ENCODE measurements at regions of chr12 and their contacts with region 1.

Region 1: DNA sequence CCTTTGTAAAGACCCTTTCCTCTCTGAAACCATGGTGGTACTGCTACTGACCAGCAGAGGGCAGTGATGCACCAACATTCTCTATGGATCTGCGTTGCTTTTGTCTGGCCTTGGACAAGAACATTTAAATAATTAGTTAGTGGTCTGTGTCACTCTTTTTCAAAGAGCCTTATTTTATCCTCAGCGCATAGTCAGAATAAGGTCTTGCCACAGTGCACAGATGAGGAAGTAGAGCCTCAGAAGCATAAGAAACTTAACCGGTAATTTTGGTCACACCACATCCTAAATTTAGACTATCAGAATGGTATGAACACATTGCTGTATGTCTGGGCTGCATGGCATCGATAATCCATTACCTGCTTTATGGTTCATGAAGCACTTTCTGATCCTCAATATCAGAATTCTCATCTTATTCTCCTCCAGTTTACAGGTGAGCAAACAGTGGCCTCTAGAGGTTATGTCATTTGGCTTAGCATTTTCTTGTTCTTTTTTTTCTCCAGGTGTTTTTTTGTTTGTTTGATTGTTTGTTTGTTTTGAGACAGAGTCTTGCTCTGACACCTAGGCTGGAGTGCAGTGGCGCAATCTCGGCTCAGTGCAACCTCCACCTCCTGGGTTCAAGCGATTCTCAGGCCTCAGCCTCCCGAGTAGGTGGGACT is 23.7 kb upstream of the IFT81 start:
- DNase-seq: peak; percentile 41
- ATAC-seq: peak; percentile 96
- H3K4me3 Mint-ChIP-seq: peak overlapping the region; percentile 50
- H3K27ac Mint-ChIP-seq: peak overlapping the region; percentile 80
- H3K4me1 Mint-ChIP-seq: peaks cover 23% of the 10 kb centered on the region
- H3K27me3 Mint-ChIP-seq: no peaks in the 10 kb centered on the region
- CTCF ChIP-seq: peak; percentile 55

Region 2: DNA sequence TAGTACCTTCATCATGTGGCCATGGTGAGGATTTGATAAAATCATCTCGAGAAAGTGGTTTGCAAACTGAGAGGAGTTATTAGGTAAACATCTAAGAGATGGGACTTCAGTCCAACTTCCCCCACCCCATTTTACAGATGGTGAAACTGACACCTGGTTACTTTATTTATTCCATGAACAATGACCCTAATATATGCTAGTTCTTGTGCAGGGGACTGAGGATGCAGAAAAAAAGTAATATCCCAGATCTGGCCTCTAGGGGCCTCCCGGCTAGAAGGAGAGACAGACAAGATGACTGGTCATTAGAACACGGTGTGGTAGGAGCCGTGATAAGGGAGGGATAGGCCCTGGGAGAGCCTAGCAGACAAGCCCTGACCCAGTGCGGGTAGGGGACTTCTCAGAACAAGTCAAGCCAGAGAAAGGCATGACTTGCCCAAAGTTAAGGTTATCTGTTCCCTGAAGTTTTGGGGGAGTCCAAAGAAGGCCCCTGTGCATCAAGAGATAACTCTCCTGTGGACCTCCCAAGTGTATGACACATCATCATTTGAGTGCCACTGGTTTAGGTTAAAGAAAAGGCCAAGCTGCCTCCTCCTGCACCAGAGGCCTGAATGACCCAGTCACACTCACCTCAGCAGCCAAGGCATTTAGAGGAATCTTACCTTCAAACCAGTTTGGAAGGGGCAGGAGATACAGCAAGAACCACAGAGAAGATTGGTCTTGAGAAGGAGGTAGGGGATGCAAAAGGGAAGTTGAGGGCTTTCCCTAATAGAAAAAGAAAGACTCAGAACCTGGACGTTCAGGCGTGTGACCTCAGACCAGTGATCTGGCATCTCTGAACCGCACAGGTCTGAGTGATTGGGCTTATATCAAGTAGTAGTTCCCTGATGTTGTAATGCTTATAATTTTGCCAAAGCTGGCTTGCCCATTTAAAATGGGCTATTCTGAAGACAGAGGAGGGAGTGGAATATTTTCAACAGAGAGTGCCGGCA is 1762.9 kb before region 1 on chr12:
- CTCF ChIA-PET with region 1: no interaction called
- POLR2A ChIA-PET with region 1: no interaction called
- intact Hi-C with region 1: no loop called
- DNase-seq: no peak
- ATAC-seq: no peak
- H3K4me3 Mint-ChIP-seq: no peak overlapping the region
- H3K27ac Mint-ChIP-seq: no peak overlapping the region
- H3K4me1 Mint-ChIP-seq: no peaks in the 10 kb centered on the region
- H3K27me3 Mint-ChIP-seq: peaks cover 27% of the 10 kb centered on the region
- CTCF ChIP-seq: no peak

Region 3: DNA sequence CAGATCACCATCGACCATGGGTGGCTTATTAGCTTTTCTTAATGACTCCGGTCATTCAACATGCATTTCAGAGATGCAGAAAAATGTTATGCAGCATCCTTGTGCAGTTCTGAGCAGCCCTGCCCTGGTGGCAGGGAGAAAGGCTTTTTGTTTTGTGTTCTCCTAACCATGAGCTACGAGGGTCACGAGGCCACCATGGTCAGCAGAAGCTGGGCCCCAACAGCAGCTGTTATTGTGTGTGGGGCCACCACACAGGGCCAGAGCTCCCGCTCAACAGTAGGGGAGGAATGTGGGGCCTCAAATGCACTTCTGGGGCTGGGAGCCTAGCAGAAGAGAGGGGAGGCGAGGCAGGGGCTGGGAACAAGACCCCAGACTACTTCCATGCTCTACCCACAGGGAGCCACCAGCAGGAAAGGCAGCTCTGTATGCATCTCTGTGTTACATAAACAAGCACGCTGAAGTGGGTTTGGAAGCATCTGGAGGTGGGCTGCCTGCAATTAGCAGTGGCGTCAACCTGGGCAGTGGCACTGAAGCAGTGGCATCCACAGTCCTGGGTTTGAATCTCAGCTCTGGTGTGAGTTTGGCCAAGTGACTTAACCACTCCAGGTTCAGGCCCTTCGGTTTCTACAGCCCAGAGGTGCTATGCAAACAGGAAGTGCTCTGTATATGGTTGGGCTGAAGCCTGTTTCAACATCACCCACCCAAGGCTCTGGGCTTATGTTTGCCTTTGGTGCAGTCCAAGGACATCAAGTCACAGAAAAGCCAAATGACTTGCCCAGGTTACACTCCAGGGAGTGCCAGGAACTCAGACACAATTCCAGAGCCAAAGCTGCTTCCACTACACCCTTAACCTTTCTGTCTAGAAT is 236.4 kb before region 1 on chr12:
- CTCF ChIA-PET with region 1: no interaction called
- POLR2A ChIA-PET with region 1: no interaction called
- intact Hi-C with region 1: no loop called
- DNase-seq: no peak
- ATAC-seq: no peak
- H3K4me3 Mint-ChIP-seq: no peak overlapping the region
- H3K27ac Mint-ChIP-seq: peak overlapping the region; percentile 18
- H3K4me1 Mint-ChIP-seq: peaks cover 15% of the 10 kb centered on the region
- H3K27me3 Mint-ChIP-seq: no peaks in the 10 kb centered on the region
- CTCF ChIP-seq: no peak

Region 4: DNA sequence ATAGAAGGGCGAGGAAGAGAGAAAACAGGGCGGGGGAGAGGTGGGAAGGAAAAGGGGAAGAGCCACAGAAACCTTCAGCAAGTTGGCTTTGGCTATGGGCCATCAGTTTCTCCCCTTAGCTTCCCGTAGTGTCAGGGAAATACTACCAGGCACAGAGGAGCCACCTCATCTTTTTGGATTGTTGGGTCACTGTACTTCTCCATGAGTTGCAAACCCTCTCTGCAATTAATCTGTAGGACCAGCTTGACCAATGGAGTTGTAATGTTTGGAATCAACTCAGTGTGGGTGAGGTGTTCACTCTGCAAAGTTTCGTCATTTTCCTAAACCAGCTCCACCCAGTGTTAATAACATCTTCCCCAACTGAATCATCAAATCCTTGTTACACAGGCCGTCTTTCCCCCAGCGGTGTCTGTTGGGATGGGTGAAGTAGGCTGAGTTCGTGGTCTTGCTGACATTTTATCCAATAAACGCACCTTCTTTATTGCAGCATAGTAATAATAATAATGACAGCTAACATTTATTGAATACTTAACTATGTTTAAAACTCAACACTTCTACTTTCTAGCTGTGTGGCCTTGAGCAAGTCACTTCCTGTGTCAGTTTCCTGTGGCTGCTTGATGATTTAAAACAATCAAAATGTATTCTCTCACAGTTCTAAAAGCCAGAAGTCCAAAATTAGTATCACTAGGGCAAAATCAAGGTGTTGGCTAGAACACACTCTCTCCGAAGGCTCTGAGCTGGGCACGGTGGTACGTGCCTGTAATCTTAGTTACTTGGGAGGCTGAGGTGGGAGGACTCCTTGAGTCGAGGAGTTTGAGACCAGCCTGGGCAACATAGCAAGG is 212.0 kb before region 1 on chr12:
- CTCF ChIA-PET with region 1: no interaction called
- POLR2A ChIA-PET with region 1: no interaction called
- intact Hi-C with region 1: no loop called
- DNase-seq: no peak
- ATAC-seq: peak; percentile 58
- H3K4me3 Mint-ChIP-seq: peak overlapping the region; percentile 63
- H3K27ac Mint-ChIP-seq: peak overlapping the region; percentile 95
- H3K4me1 Mint-ChIP-seq: peaks cover 54% of the 10 kb centered on the region
- H3K27me3 Mint-ChIP-seq: no peaks in the 10 kb centered on the region
- CTCF ChIP-seq: no peak

Region 5: DNA sequence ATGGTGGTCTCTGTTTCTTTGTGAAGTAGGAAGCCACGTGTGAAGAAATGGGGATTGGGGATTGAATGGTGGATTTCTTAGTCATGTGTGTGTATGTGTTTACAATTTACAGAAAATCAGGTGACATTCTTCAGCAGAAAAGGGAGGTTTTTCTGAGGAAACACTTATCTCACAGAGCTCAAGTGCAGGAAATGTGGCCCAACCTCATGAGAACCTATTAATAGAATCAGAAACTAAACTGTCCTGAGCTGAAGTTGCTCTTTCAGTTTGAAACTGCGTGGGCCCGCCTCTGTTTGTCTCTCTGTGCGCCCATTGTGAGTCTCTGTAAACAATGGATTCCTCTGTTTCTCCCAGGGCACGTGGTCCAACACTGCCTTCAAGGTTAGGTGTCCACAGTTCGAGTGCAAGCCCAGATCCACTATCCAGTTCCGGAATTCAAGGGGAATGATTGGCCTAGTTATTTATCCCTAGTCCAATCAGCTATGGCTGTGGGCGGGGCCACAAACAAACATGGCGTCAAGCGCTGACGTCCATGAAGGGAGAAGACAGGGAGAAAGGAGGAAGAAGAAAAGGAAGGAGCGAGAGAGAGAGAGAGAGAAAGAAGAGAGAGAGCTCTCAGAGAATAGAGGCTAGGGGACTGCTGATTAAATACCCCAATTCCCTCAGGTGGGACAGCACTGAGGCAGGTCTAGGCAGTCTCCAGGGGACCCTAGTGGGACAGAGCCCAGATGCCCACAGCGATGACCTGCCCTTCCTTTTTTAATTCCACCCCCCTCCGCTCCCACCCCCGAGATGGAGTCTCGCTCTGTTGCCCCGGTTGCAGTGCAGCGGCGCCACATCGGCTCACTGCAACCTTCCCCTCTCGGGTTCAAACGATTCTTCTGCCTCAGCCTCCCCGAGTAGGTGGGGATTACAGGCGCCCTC is 20.7 kb before region 1 on chr12:
- CTCF ChIA-PET with region 1: no interaction called
- POLR2A ChIA-PET with region 1: interaction called, 3 read pairs
- intact Hi-C with region 1: loop called (anchors 1 kb)
- DNase-seq: peak; percentile 50
- ATAC-seq: peak; percentile 91
- H3K4me3 Mint-ChIP-seq: peak overlapping the region; percentile 82
- H3K27ac Mint-ChIP-seq: peak overlapping the region; percentile 99
- H3K4me1 Mint-ChIP-seq: peaks cover 24% of the 10 kb centered on the region
- H3K27me3 Mint-ChIP-seq: no peaks in the 10 kb centered on the region
- CTCF ChIP-seq: no peak

Region 6: GRCh38 chr12:110245369-110245772 is 144.9 kb after region 1 on chr12:
- CTCF ChIA-PET with region 1: interaction called, 6 read pairs
- POLR2A ChIA-PET with region 1: no interaction called
- intact Hi-C with region 1: loop called (anchors 1 kb)
- DNase-seq: peak; percentile 36
- ATAC-seq: peak; percentile 90
- H3K4me3 Mint-ChIP-seq: no peak overlapping the region
- H3K27ac Mint-ChIP-seq: no peak overlapping the region
- H3K4me1 Mint-ChIP-seq: peaks cover 8% of the 10 kb centered on the region
- H3K27me3 Mint-ChIP-seq: peaks cover 2% of the 10 kb centered on the region
- CTCF ChIP-seq: no peak

Region 7: DNA sequence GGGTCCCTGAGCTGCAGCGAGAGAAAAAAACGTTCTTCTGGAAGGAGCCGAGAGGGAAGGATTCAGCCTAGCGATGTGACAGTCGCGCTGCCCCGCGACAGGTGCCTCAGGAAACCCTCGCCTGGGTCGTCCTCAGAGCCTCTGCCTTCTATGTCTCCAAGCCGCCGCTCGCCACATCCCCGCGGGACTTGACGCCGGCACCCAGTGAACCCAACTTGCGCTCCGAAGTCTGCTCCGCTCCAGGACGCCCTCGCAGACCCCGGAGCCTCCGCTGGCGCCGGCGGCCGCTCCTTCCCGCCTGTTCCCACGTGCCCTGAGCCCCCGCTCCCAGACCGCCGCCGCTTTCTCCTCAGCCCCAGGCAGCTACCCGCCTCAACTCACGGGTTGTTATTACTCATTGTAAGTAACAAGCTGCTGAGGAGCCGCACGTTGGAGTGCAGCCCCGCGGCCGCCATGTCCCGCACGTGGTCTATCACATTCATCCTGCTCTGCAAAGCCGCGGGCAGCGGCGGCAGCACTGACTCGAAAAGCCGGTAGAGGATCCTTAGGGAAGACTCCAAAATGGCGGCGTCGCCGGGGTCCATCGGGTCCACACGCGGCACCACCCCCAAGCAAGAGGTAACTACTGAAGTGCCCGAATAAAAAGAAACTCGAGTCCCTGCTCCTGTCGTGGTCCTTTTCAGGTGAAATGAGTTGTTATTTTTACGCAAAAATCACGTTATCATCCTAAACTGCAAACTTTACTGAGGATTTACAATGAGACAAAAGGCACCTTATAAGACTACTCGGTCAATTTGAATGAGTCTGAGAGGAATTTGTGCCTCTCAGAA is 302.9 kb after region 1 on chr12 and contains the start of gene ANAPC7:
- CTCF ChIA-PET with region 1: no interaction called
- POLR2A ChIA-PET with region 1: interaction called, 3 read pairs
- intact Hi-C with region 1: loop called (anchors 1 kb)
- DNase-seq: peak; percentile 73
- ATAC-seq: peak; percentile 94
- H3K4me3 Mint-ChIP-seq: peak within 1 kb of the TSS; percentile 99
- H3K27ac Mint-ChIP-seq: peak within 1 kb of the TSS; percentile 99
- H3K4me1 Mint-ChIP-seq: peaks cover 33% of the 10 kb centered on the region
- H3K27me3 Mint-ChIP-seq: no peaks in the 10 kb centered on the region
- CTCF ChIP-seq: no peak
- total RNA-seq, gene ANAPC7: 69.8 and 76.2 TPM in 2 replicates

Region 8: DNA sequence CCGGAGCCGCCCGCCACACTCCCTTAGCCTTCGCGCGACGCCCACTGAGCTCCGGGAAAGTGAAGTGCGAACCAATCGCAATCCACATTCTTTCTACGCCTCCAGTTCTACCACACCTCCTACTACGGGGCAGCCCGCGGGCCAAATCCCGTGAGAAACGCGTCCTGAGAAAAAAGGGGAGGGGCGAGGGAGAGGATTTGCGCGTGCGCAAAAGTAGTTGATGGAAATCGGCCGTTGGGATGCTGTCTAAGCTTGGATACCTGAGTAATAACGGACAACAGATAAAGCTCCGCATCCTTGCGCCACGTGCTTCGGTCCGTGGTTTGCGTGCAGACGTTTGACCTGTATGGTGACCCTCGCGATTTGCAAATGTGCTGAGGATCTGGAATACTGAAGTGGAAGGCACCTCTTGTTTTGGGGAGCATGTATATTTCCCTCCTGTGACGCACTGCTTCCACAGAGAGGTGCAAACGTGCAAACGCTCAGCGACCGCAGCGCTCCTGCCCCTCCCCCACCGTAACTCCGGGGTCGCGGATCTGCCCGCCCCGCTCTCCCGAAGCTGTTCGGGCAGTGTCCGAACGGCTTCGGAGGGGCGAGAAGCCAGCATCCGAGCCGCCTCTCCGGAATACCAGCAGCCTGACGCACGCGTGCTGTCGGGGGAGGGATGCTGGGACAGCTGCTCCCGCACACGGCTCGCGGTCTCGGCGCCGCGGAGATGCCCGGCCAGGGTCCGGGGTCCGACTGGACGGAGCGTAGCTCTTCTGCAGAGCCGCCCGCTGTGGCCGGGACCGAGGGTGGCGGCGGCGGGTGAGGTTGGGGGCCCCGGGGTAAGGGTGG is 368.0 kb after region 1 on chr12 and contains the starts of genes FAM216A and GPN3:
- CTCF ChIA-PET with region 1: no interaction called
- POLR2A ChIA-PET with region 1: no interaction called
- intact Hi-C with region 1: loop called (anchors 1 kb)
- DNase-seq: peak; percentile 86
- ATAC-seq: peak; percentile 91
- H3K4me3 Mint-ChIP-seq: peak within 1 kb of the TSS; percentile 100
- H3K27ac Mint-ChIP-seq: peak within 1 kb of the TSS; percentile 96
- H3K4me1 Mint-ChIP-seq: peaks cover 41% of the 10 kb centered on the region
- H3K27me3 Mint-ChIP-seq: no peaks in the 10 kb centered on the region
- CTCF ChIP-seq: no peak
- total RNA-seq, gene FAM216A: 9.7 and 9.9 TPM in 2 replicates
- total RNA-seq, gene GPN3: 17.0 and 19.0 TPM in 2 replicates

Region 9: DNA sequence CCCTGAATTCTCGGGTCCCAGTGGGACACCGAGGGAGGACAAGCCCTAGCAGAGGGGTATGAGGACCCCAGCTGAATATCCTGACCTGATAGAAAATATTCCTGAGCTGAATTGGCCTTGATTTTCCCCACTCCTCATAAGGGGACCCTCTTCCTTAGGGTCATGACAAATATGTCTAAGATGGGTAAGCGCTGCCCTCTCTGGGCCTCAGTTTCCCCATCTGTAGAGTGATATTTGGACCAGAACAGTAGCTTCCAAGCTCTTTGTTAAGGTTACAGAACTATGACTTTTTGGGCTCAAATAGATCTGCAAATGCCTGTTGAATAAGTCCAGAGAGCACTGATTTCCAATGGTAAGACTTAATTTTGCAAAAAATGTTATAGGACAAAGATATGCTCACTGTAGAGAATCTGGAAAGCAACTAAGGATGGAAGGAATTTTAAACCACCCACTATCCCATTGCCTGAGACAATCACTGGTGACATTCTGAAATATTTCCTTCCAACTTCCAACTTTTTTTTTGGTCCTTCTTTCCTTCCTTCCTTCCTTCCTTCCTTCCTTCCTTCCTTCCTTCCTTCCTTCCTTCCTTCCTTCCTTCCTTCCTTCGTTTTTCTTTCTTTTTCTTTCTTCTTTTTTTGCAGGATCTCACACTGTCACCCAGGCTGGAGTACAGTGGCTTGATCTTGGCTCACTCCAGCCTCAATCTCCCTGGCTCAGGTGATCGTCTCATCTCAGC is 788.0 kb after region 1 on chr12:
- CTCF ChIA-PET with region 1: interaction called, 3 read pairs
- POLR2A ChIA-PET with region 1: no interaction called
- intact Hi-C with region 1: loop called (anchors 1 kb)
- DNase-seq: no peak
- ATAC-seq: no peak
- H3K4me3 Mint-ChIP-seq: peak overlapping the region; percentile 92
- H3K27ac Mint-ChIP-seq: peak overlapping the region; percentile 84
- H3K4me1 Mint-ChIP-seq: peaks cover 4% of the 10 kb centered on the region
- H3K27me3 Mint-ChIP-seq: no peaks in the 10 kb centered on the region
- CTCF ChIP-seq: no peak